Activated naive CD4-positive, alpha-beta T cell treated with anti-CD3 and anti-CD28 coated beads, Interleukin-2, amount 10 ng/mL, durations not matched to agents 7 days and 5 days (primary cell): ENCODE measurements at regions of chr1 and their contacts with region 1.

Region 1: DNA sequence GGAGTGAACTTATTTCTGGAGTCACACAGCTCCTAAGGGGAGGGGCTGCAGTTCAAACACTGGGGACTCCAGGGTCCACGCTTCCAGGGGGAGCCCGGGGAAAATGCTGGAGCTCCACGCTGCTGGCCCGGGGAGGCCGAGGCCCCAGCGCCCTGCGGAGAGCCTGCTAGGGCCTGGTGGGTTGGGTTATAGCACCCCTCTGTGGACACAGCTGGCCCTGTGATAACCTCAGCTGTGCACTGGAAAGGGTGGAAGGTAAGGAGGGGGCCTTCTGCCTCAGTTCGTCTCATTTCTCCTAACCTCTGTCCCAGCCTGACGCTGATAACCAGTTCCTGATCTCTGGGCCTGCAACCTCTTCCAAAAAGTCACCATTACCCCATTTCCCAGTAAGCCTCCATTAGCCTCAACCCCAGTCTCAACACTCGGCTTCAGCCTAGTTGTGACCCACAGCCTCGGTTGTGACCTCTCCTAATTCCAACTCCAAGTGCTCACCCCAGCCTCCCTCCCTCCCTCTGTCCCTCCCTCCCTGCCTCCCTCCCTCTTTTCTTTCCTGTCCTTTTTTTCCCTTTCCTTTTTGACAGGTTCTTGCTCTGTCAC is 7.1 kb downstream of the NBL1 start:
- DNase-seq: peak; percentile 70
- H3K4me3 Mint-ChIP-seq: no peak overlapping the region
- H3K27ac Mint-ChIP-seq: no peak overlapping the region
- H3K4me1 Mint-ChIP-seq: peaks cover 27% of the 10 kb centered on the region
- H3K27me3 Mint-ChIP-seq: peaks cover 6% of the 10 kb centered on the region

Region 2: DNA sequence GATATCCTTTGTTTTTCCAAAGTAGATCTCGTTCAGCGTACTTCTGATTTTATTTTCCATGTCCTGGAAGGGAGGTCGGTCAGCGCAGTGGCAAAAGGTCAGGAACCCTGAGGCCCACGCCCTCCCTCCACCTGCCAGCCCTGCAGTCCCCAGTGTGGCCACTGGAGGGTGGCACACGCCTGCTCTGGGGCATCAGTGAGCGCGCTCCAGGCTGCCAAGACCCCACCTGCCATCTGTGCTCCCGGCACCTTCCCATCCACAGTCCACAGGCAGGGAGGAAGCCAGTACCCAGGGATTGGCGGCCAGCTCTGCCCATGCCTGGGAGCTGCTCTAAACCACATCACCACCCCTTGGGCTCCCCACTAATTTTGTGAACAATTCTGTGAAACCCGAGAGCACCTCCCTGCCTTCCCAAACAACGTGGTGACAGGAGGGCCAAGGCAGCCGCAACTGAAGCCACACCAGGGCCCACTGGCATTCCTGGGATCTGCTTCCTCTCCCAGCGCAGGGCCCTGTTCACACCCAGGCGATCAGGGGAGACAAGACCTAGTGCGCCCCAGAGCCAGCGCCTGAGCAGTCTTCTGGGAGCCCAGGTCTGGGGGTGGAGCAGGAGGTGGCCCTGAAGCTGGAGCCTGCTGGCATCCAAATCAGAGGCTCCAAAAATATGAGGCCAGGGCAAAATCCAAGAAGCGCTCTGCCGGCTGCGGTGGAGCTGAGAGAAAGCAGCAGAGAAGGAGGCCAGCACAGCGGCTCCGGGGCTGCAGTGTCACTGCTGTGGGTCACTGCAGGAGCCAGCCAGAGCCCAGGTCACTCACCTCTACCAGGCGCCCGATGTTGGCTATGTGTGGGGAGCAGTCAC is 306.6 kb before region 1 on chr1:
- CTCF ChIA-PET with region 1: interaction called, 17 read pairs
- DNase-seq: peak; percentile 54
- H3K4me3 Mint-ChIP-seq: no peak overlapping the region
- H3K27ac Mint-ChIP-seq: peak overlapping the region; percentile 37
- H3K4me1 Mint-ChIP-seq: no peaks in the 10 kb centered on the region
- H3K27me3 Mint-ChIP-seq: no peaks in the 10 kb centered on the region

Region 3: GRCh38 chr1:19668893-19669292 is 17.7 kb after region 1 on chr1:
- CTCF ChIA-PET with region 1: interaction called, 10 read pairs
- DNase-seq: no peak
- H3K4me3 Mint-ChIP-seq: no peak overlapping the region
- H3K27ac Mint-ChIP-seq: no peak overlapping the region
- H3K4me1 Mint-ChIP-seq: peaks cover 13% of the 10 kb centered on the region
- H3K27me3 Mint-ChIP-seq: peaks cover 72% of the 10 kb centered on the region